CD8-positive, alpha-beta T cell (primary cell): ENCODE measurements at regions of chr17 and their contacts with region 1.

Region 1: DNA sequence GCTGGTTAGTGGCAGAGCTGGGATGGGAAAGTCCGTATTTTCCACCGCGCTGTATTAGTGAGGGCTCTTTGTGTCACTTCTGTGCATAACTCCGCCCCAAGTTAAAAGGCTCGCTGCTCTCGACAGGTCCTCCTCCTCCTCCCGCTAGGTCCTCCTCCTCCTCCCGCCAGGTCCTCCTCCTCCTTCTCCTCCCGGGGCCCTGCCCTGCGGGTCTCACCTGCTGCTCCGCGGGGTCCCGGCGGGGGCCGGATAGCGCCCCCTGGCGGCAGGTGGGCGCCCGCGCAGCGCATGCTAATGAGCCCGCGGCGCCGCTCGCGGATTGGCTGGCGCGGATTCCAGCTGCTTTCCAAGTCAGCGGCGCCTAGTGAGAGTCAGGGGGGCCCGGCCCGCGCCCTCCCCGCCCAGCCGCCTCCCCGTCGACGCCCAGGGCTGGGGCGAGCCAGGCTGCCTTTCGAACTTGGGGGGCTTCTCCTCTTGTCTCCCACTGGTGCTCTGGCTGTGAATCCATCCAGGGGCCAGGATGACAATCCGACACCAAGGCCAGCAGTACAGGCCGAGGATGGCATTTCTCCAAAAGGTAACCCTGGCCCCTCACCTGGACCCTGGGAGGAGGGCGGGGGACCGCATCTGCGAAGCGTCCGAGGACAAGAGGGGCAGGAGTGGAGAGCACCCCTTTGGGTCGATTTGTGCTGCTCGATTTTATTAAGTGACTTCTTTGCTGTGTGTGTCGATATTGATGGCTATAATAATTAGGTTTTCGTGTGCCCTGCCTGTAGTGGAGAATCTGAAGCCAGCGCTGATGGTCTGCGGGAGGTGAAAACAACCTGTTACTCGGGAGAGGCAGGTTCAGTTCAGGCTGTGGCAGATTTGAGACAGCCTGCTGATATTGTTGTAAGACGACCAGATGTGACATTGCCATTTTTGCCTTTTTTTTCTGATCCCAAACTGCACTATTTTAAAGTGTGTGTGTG is at the start of gene RGS9:
- DNase-seq: peak; percentile 68 to 93 (median 86)
- ATAC-seq: peak; percentile 99
- H3K4me3 ChIP-seq: peak within 1 kb of the TSS; percentile 59 to 65
- H3K4me3 Mint-ChIP-seq: peak within 1 kb of the TSS; percentile 77
- H3K27ac ChIP-seq: peak within 1 kb of the TSS in 1 of 2 experiments; percentile 43
- H3K27ac Mint-ChIP-seq: no peak within 1 kb of the TSS
- H3K4me1 ChIP-seq: peaks cover 24% of the 10 kb centered on the region
- H3K4me1 Mint-ChIP-seq: peaks cover 28% of the 10 kb centered on the region
- H3K27me3 ChIP-seq: peaks cover 0 to 2% of the 10 kb centered on the region in 2 experiments
- H3K27me3 Mint-ChIP-seq: peaks cover 16% of the 10 kb centered on the region
- CTCF ChIP-seq: peak; percentile 97
- total RNA-seq, gene RGS9: 1.1 to 1.6 TPM

Region 2: DNA sequence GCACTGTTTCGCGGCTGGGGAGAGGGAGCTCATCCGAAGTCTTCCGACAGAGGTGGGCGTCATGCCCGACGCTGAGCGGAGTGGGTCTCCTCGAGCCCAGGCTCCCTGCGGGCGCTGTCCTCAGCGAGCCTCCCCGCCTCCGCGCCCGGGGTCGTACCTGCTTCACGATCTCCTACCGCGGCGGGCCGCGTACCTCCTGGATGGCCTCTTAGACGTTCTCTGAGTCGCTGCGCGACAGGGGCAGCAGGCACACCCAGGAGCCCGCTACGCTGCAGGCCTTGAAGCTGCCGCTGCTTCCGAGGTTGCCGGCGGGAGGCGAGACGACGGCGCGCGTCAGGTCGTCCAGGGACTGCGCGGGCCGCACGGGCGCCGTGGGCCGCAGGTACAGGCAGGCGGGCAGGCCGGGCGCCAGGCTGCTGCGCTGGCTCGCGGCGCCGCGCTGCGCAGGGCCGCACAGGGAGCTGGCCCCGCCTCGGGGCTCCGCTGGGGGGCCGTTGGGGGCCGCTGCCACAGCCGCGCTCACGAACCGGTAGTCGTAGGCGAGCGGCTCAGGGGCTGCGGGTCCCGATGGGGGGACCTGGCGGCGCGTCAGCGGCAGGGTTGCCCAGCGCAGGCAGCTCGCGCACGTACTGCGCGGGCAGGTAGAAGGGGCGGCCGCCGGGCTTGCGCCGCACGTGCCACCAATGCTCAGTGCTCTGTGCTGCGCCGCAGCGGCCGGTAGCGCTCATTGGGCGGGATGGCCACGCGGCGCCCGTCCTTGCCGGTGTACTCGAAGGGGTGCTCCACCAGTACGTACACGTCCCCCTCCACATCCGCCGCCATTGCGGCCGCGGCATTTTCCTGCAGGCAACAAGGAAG is 358.8 kb before region 1 on chr17:
- CTCF ChIA-PET with region 1: no interaction called
- POLR2A ChIA-PET with region 1: no interaction called
- intact Hi-C with region 1: loop called in 1 of 2 experiments (anchors 5 kb)
- DNase-seq: peak in 4 of 9 experiments; percentile 28 to 62 (median 51)
- ATAC-seq: no peak
- H3K4me3 ChIP-seq: peak overlapping the region in 1 of 2 experiments; percentile 24
- H3K4me3 Mint-ChIP-seq: peak overlapping the region; percentile 58
- H3K27ac ChIP-seq: no peak overlapping the region
- H3K27ac Mint-ChIP-seq: no peak overlapping the region
- H3K4me1 ChIP-seq: peaks cover 37% of the 10 kb centered on the region
- H3K4me1 Mint-ChIP-seq: peaks cover 26% of the 10 kb centered on the region
- H3K27me3 ChIP-seq: no peaks in the 10 kb centered on the region
- H3K27me3 Mint-ChIP-seq: peaks cover 2% of the 10 kb centered on the region
- CTCF ChIP-seq: no peak

Region 3: GRCh38 chr17:65122836-65123756 is 14.2 kb before region 1 on chr17:
- CTCF ChIA-PET with region 1: interaction called, 14 read pairs
- POLR2A ChIA-PET with region 1: interaction called, 12 read pairs
- intact Hi-C with region 1: loop called (anchors 1 kb)
- DNase-seq: peak; percentile 70 to 94 (median 81)
- ATAC-seq: peak; percentile 96
- H3K4me3 ChIP-seq: peak overlapping the region; percentile 40 to 70
- H3K4me3 Mint-ChIP-seq: peak overlapping the region; percentile 87
- H3K27ac ChIP-seq: peak overlapping the region; percentile 46 to 82
- H3K27ac Mint-ChIP-seq: peak overlapping the region; percentile 98
- H3K4me1 ChIP-seq: peaks cover 6% of the 10 kb centered on the region
- H3K4me1 Mint-ChIP-seq: peaks cover 14% of the 10 kb centered on the region
- H3K27me3 ChIP-seq: no peaks in the 10 kb centered on the region
- H3K27me3 Mint-ChIP-seq: peaks cover 5% of the 10 kb centered on the region
- CTCF ChIP-seq: no peak

Region 4: GRCh38 chr17:65154770-65155621 is 17.7 kb after region 1 on chr17:
- CTCF ChIA-PET with region 1: interaction called, 11 read pairs
- POLR2A ChIA-PET with region 1: no interaction called
- intact Hi-C with region 1: no loop called
- DNase-seq: no peak
- ATAC-seq: no peak
- H3K4me3 ChIP-seq: no peak overlapping the region
- H3K4me3 Mint-ChIP-seq: no peak overlapping the region
- H3K27ac ChIP-seq: no peak overlapping the region
- H3K27ac Mint-ChIP-seq: no peak overlapping the region
- H3K4me1 ChIP-seq: no peaks in the 10 kb centered on the region
- H3K4me1 Mint-ChIP-seq: peaks cover 15% of the 10 kb centered on the region
- H3K27me3 ChIP-seq: no peaks in the 10 kb centered on the region
- H3K27me3 Mint-ChIP-seq: no peaks in the 10 kb centered on the region
- CTCF ChIP-seq: no peak

Region 5: DNA sequence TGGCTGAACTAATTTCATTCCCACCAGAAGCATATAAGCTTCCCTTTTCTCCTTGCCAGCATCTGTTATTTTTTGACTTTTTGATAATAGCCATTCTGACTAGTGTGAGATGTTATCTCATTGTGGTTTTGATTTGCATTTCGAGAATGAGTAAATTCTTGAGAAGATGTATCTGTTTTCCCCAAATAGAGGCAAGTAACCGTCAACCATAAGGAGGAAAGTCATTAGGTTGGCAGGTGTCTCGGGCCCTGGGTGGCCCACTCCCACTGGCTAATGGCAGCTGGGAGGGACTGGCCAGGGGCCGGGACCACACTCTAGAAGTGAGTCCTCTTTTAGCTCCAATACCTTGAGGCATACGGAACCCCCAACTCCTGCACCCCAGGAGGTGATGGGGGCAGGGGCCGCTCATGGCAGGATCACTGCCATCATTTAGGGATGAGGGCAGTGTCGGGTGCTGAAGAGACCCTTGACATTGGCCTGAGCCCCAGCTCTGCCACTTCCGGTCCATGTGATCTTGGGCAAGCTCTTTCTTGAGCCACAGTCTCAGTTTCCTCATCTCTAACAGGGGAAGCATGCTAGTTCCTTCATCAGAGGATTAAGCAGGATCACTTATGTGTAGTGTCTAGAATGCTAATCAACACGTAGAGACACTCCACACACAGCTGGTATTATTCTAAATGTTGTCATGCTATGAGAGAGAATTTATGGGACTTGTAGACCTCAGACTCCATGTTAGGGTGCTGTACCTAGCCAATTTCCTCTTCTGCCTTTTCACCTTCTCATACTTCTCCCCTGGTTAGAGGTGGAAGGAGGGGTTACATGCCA is 44.1 kb after region 1 on chr17:
- CTCF ChIA-PET with region 1: interaction called, 3 read pairs
- POLR2A ChIA-PET with region 1: interaction called, 8 read pairs
- intact Hi-C with region 1: loop called in 1 of 2 experiments (anchors 2 kb)
- DNase-seq: peak in 2 of 9 experiments; percentile 13 to 35
- ATAC-seq: no peak
- H3K4me3 ChIP-seq: no peak overlapping the region
- H3K4me3 Mint-ChIP-seq: no peak overlapping the region
- H3K27ac ChIP-seq: peak overlapping the region in 1 of 2 experiments; percentile 68
- H3K27ac Mint-ChIP-seq: peak overlapping the region; percentile 78
- H3K4me1 ChIP-seq: peaks cover 41% of the 10 kb centered on the region
- H3K4me1 Mint-ChIP-seq: peaks cover 49% of the 10 kb centered on the region
- H3K27me3 ChIP-seq: no peaks in the 10 kb centered on the region
- H3K27me3 Mint-ChIP-seq: peaks cover 2% of the 10 kb centered on the region
- CTCF ChIP-seq: no peak

Region 6: DNA sequence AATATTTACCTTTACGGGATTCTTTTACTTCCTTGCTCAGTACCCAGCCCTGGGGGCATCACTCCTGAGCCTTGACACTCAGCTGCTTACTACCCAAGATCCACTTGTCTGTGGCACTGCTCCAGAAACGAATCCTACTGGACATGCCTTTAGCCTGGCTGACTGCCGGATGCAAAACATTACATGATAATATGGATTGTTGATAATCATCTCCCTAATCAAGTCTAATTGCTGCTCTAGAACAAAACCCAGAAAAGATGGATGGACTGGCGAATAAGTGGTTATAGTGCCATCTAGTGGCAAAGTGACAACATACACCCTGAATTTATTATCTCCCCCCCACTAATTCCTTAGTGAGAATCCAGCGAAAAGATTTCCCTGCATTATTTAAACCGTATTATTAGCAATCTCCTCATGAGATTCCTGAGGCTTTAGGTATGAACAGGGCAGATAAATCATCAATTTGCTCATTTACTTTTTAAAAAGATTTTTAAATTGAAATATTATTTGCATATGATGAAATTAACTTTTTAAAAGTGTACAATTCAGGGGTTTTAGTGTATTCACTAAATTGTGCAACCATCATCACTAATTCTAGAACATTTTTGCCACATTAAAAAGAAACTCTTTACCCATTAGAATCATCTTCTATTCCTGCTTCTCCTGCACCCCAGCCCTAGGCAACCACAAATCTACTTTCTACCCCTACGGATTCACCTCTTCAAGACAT is 61.5 kb after region 1 on chr17:
- CTCF ChIA-PET with region 1: interaction called, 4 read pairs
- POLR2A ChIA-PET with region 1: no interaction called
- intact Hi-C with region 1: loop called (anchors 1 kb)
- DNase-seq: peak in 5 of 9 experiments; percentile 6 to 76 (median 52)
- ATAC-seq: peak; percentile 56
- H3K4me3 ChIP-seq: no peak overlapping the region
- H3K4me3 Mint-ChIP-seq: no peak overlapping the region
- H3K27ac ChIP-seq: no peak overlapping the region
- H3K27ac Mint-ChIP-seq: no peak overlapping the region
- H3K4me1 ChIP-seq: peaks cover 3% of the 10 kb centered on the region
- H3K4me1 Mint-ChIP-seq: peaks cover 5% of the 10 kb centered on the region
- H3K27me3 ChIP-seq: no peaks in the 10 kb centered on the region
- H3K27me3 Mint-ChIP-seq: no peaks in the 10 kb centered on the region
- CTCF ChIP-seq: peak; percentile 92

Region 7: GRCh38 chr17:65301184-65301583 is 163.9 kb after region 1 on chr17:
- CTCF ChIA-PET with region 1: no interaction called
- POLR2A ChIA-PET with region 1: no interaction called
- intact Hi-C with region 1: no loop called
- DNase-seq: no peak
- ATAC-seq: no peak
- H3K4me3 ChIP-seq: no peak overlapping the region
- H3K4me3 Mint-ChIP-seq: no peak overlapping the region
- H3K27ac ChIP-seq: no peak overlapping the region
- H3K27ac Mint-ChIP-seq: no peak overlapping the region
- H3K4me1 ChIP-seq: no peaks in the 10 kb centered on the region
- H3K4me1 Mint-ChIP-seq: no peaks in the 10 kb centered on the region
- H3K27me3 ChIP-seq: no peaks in the 10 kb centered on the region
- H3K27me3 Mint-ChIP-seq: peaks cover 6% of the 10 kb centered on the region
- CTCF ChIP-seq: no peak